H1 (cell line): ENCODE measurements at regions of chr3 and their contacts with region 1.

Region 1: GRCh38 chr3:101849051-101849720 is at the start of gene NFKBIZ:
- DNase-seq: peak; percentile 80 to 93
- H3K4me3 ChIP-seq: peak within 1 kb of the TSS; percentile 82 to 99 (median 90)
- H3K27ac ChIP-seq: peak within 1 kb of the TSS; percentile 89; the same call in 1 of the 2 replicates
- H3K4me1 ChIP-seq: peaks cover 4 to 14% (median 9%) of the 10 kb centered on the region in 4 experiments
- H3K27me3 ChIP-seq: no peaks in the 10 kb centered on the region
- CTCF ChIP-seq: no peak
- EP300 ChIP-seq: peak in 1 of 2 experiments; percentile 72; a peak in 1 of 3 replicates
- POLR2A ChIP-seq: peak; percentile 60 to 95
- RAD21 ChIP-seq: no peak; a peak in 1 of 4 replicates
- total RNA-seq, gene NFKBIZ: 24.5 TPM in 2 replicates

Region 2: DNA sequence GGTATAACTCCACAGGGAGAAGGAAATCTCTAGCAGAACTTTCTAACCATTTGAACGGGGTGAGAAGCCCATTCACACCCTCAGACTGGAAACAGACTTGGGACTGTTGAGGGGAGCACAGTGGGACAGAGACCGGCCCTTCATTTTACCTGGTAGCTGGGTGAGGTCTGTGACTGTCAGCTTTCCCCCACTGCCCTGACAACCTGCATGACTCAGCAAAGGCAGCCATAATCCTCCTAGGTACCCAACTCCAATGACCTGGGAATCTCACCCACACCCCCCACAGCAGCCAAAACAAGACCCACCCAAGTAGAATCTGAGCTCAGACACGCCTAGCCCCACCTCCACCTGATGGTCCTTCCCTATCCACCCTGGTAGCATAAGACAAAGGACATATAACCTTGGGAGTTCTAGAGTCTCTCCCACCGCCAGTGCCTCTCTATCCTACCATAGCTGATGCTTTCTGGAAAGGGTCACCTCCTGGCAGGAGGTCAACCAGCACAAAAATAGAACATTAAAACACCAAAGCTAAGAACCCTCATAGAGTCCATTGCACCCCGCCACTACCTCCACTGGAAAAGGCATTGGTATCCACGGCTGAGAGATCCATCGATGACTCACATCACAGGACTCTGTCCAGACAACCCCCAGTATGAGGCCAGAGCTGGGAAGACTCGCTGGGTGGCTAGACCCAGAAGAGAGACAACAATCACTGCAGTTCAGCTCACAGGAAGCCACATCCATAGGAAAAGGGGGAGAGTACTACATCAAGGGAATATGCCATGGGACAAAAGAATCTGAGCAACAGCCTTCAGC is 364.2 kb before region 1 on chr3:
- CTCF ChIA-PET with region 1: no interaction called
- POLR2A ChIA-PET with region 1: no interaction called
- DNase-seq: no peak
- H3K4me3 ChIP-seq: no peak overlapping the region
- H3K27ac ChIP-seq: no peak overlapping the region
- H3K4me1 ChIP-seq: no peaks in the 10 kb centered on the region
- H3K27me3 ChIP-seq: no peaks in the 10 kb centered on the region
- CTCF ChIP-seq: no peak
- EP300 ChIP-seq: no peak
- POLR2A ChIP-seq: no peak
- RAD21 ChIP-seq: no peak

Region 3: DNA sequence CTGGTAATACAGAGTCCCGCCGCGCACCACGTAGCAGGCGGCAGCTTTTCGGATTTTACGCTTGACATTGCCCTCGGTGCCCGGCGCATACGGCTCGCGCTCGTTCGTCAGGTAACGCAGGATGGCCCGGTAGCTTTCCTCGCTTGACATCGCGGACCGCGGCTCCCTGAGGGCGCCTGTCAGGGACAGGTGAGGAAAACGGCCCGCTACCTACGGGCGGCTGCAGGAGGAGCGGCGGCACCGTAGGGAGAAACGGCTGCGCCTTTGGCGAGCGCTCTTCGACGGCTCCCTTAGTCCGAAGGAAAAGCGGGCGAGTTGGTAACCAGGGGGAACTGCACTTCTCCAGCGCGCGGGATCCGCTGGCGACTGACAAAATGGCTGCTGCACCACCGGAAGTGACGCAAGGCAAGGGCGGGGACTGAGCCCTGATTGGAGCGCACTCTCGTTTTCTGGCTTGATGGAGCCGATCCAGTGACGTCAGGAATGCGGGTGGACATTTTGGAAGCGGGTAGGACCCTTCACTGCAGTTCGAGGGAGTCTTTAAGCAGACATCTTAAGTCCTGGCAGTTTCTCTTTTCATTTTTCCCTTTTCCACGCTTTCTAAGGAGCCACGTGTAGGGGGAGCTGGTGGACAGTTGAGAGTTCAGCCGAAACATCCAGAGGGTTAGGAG is 172.3 kb before region 1 on chr3 and contains the start of gene ZBTB11:
- CTCF ChIA-PET with region 1: no interaction called
- POLR2A ChIA-PET with region 1: interaction called, 12 read pairs
- DNase-seq: peak; percentile 99 to 100
- H3K4me3 ChIP-seq: peak within 1 kb of the TSS; percentile 72 to 98 (median 85)
- H3K27ac ChIP-seq: peak within 1 kb of the TSS; percentile 77
- H3K4me1 ChIP-seq: no peaks in the 10 kb centered on the region; a peak in 2 of 7 replicates
- H3K27me3 ChIP-seq: no peaks in the 10 kb centered on the region
- CTCF ChIP-seq: peak; percentile 41 to 71 (median 43)
- EP300 ChIP-seq: no peak
- POLR2A ChIP-seq: peak in 1 of 2 experiments; percentile 62; a peak in 1 of 3 replicates
- RAD21 ChIP-seq: peak; percentile 48 to 56
- total RNA-seq, gene ZBTB11: 14.0 and 14.3 TPM in 2 replicates

Region 4: GRCh38 chr3:101809178-101810021 is 39.8 kb before region 1 on chr3:
- CTCF ChIA-PET with region 1: interaction called, 24 read pairs
- POLR2A ChIA-PET with region 1: interaction called, 14 read pairs
- DNase-seq: no peak
- H3K4me3 ChIP-seq: no peak overlapping the region
- H3K27ac ChIP-seq: no peak overlapping the region
- H3K4me1 ChIP-seq: no peaks in the 10 kb centered on the region
- H3K27me3 ChIP-seq: no peaks in the 10 kb centered on the region
- CTCF ChIP-seq: peak in 2 of 3 experiments; percentile 44 to 59; a peak in 2 of 4 replicates
- EP300 ChIP-seq: no peak
- POLR2A ChIP-seq: no peak
- RAD21 ChIP-seq: peak; percentile 75 to 82

Region 5: DNA sequence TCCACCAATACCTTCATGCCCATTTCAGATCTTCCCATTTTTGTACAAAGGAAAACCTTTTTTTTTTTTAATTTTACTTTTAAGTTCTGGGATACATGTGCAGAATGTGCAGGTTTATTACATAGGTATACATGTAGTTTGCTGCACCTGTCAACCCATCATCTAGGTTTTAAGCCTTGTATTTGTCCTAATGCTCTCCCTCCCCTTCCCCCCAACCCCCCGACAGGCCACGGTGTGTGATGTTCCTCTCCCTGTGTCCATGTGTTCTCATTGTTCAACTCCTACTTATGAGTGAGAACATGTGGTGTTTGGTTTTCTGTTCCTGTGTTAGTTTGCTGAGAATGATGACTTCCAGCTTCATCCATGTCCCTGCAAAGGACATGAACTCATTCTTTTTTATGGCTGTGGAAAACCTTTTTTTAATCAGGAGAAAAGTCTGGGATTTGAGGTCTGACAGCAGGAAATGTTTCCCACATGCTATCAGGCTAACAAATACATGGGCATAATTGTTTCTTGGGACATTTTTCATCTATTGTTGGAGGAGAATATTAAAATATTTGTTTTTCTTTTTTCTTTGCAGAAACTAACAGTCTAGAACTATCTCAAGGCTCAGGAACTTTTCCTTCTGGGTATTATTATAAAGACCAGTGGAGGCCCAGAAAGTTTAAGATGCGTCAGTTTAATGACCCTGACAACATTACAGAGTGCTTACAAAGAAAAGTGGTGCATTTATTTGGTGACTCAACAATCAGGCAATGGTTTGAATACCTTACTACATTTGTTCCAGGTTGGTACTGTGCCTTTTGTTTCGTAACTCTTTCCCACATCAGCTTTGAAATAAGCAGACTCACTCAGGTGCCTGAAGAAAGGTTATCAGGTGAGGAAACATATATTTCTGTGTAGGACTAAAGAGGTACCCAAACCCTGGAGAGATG is 32.7 kb before region 1 on chr3:
- CTCF ChIA-PET with region 1: interaction called, 24 read pairs
- POLR2A ChIA-PET with region 1: interaction called, 21 read pairs
- DNase-seq: no peak
- H3K4me3 ChIP-seq: no peak overlapping the region
- H3K27ac ChIP-seq: no peak overlapping the region
- H3K4me1 ChIP-seq: no peaks in the 10 kb centered on the region
- H3K27me3 ChIP-seq: no peaks in the 10 kb centered on the region
- CTCF ChIP-seq: no peak
- EP300 ChIP-seq: no peak
- POLR2A ChIP-seq: no peak
- RAD21 ChIP-seq: no peak

Region 6: GRCh38 chr3:101827211-101828174 is 21.7 kb before region 1 on chr3:
- CTCF ChIA-PET with region 1: interaction called, 5 read pairs
- POLR2A ChIA-PET with region 1: interaction called, 23 read pairs
- DNase-seq: peak in 1 of 2 experiments; percentile 76
- H3K4me3 ChIP-seq: peak overlapping the region; percentile 52 to 70 (median 64)
- H3K27ac ChIP-seq: peak overlapping the region; percentile 64; the same call in 1 of the 2 replicates
- H3K4me1 ChIP-seq: peaks cover 0 to 8% (median 4%) of the 10 kb centered on the region in 4 experiments; a peak in 5 of 7 replicates
- H3K27me3 ChIP-seq: no peaks in the 10 kb centered on the region
- CTCF ChIP-seq: no peak
- EP300 ChIP-seq: no peak
- POLR2A ChIP-seq: peak in 1 of 2 experiments; percentile 87; a peak in 2 of 3 replicates
- RAD21 ChIP-seq: peak in 1 of 2 experiments; percentile 20; a peak in 3 of 4 replicates

Region 7: DNA sequence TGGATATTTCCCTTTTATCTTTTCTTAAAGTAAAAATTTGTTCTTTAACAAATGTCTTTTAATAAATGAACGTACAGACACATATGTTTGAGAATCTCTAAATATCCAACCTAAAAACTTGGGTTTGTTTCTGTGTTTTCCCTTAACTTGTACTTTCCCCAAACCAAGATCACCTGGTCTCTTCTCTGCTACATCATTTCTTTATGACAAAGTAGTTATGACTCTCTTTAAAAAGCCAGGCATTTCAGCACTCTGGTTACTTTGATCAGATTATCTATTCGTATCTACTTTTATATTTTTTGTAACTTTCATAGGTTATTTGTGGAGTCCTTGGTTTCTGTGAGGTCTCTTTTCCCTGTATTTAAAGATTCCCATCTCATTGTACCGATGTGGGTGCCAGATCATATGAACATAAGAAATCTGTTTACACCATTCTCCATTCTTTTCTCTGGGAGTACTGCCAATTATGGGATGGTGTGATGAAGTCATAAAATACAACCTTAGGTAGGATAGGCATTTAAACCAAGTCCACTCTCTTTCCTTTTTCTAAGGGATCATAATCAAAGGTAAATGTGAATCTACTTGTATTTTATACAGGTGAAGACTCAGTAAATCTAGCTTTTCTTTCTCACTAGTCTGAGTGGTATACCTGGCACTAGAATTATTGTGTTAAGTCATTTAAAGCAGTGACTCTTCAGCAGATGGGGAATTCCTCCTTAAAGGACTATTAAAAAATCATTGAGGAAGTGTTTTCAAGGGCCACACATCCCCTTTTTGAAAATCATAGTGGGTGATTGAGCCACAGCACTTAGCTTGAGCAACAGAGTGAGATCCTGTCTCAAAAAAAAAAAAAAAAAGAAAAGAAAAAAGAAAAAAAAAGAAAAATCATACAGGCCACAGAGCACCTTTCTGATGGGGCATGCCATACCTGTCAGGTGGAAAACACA is 12.3 kb before region 1 on chr3:
- CTCF ChIA-PET with region 1: interaction called, 3 read pairs
- POLR2A ChIA-PET with region 1: interaction called, 18 read pairs
- DNase-seq: no peak
- H3K4me3 ChIP-seq: no peak overlapping the region
- H3K27ac ChIP-seq: no peak overlapping the region
- H3K4me1 ChIP-seq: peaks cover under 1 to 5% (median 1%) of the 10 kb centered on the region in 4 experiments; a peak in 4 of 7 replicates
- H3K27me3 ChIP-seq: no peaks in the 10 kb centered on the region
- CTCF ChIP-seq: no peak
- EP300 ChIP-seq: no peak
- POLR2A ChIP-seq: no peak
- RAD21 ChIP-seq: no peak

Region 8: GRCh38 chr3:101861212-101861788 is 12.1 kb after region 1 on chr3:
- CTCF ChIA-PET with region 1: interaction called, 3 read pairs
- POLR2A ChIA-PET with region 1: interaction called, 25 read pairs
- DNase-seq: no peak
- H3K4me3 ChIP-seq: no peak overlapping the region
- H3K27ac ChIP-seq: no peak overlapping the region
- H3K4me1 ChIP-seq: no peaks in the 10 kb centered on the region
- H3K27me3 ChIP-seq: peaks cover 0 to 1% (median 0%) of the 10 kb centered on the region in 4 experiments; a peak in 1 of 7 replicates
- CTCF ChIP-seq: no peak
- EP300 ChIP-seq: no peak
- POLR2A ChIP-seq: no peak
- RAD21 ChIP-seq: no peak

Region 9: GRCh38 chr3:101936419-101937356 is 87.5 kb after region 1 on chr3:
- CTCF ChIA-PET with region 1: no interaction called
- POLR2A ChIA-PET with region 1: no interaction called
- DNase-seq: no peak
- H3K4me3 ChIP-seq: no peak overlapping the region
- H3K27ac ChIP-seq: no peak overlapping the region
- H3K4me1 ChIP-seq: peaks cover 0 to 3% (median 1%) of the 10 kb centered on the region in 4 experiments; a peak in 2 of 7 replicates
- H3K27me3 ChIP-seq: no peaks in the 10 kb centered on the region
- CTCF ChIP-seq: no peak
- EP300 ChIP-seq: no peak
- POLR2A ChIP-seq: no peak
- RAD21 ChIP-seq: no peak